Left ventricle myocardium inferior (tissue), 1 donor: ENCODE measurements at regions of chr6 and their contacts with region 1.

Region 1: DNA sequence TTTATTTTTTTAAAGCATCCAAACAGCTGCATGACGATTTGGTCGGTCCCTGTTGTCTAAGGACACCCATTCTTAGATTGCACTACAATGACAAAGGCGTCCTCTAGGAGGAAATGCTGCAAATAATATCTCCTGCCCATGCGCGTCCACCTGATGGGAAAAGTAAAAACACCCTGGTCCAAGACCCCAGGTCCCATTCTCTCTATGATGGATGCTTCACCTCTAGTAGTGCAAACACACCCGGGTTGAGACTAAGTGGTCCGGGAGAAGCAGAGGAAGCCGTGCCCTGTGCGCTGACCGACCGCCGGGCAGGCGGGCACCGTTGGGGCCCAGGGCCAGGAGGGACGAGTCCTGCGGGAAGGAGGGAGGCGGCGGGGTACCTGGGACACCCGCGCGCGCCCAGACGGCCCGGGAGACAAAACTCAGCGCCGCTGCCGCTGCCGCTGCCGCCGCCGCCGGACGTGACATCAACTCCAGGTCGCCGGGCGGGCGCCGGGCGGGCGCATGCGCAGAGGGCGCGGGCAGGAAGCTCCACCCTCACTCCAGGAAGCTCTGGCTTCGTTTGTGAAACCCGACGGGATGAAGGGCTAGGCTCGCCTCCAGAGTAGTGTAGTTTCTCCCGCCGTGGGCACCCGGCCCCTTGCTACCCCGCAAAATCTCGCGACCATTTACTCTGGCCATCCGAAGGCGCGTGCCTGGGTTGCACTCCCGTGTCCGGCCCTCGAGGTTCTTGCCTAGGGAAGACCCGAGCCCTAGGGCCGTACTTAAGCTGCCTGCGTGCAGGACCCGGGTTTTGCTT is at the start of gene TBC1D7:
- DNase-seq: peak; percentile 93
- H3K4me3 ChIP-seq: peak within 1 kb of the TSS; percentile 87
- H3K27ac ChIP-seq: peak within 1 kb of the TSS; percentile 95
- H3K4me1 ChIP-seq: peaks cover 61% of the 10 kb centered on the region
- H3K27me3 ChIP-seq: no peaks in the 10 kb centered on the region
- CTCF ChIP-seq: peak; percentile 34
- total RNA-seq, gene TBC1D7: 40.2 TPM

Region 2: DNA sequence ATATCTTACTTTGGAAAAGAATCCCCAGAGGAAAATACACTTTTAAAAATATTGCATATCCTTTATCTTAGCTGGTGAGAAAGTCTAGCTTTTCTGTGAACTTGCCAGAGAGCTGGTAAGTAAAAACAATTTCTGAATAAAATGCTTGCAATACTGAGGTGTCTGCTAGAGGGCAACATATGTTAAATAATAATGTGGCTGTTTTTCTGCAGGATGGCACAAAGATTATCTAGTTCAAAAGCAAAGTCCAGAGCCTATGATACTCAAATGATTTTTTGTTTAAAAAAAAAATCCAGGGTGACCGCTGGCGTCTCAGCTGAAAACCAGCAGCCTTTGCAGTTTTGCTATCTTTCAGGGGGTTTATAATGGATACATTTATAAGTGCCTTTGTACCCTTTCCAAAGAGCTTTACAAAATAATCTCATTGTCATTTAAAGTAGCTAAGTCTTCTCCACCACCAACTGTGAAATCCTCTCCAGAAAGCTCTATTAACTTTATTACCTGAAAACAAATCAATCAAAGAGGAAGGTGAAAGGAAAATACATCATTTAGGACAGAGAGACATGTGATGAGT is 416.8 kb before region 1 on chr6:
- intact Hi-C with region 1: loop called (anchors 10 kb)
- DNase-seq: no peak
- H3K4me3 ChIP-seq: no peak overlapping the region
- H3K27ac ChIP-seq: no peak overlapping the region
- H3K4me1 ChIP-seq: peaks cover 20% of the 10 kb centered on the region
- H3K27me3 ChIP-seq: no peaks in the 10 kb centered on the region
- CTCF ChIP-seq: peak; percentile 68

Region 3: DNA sequence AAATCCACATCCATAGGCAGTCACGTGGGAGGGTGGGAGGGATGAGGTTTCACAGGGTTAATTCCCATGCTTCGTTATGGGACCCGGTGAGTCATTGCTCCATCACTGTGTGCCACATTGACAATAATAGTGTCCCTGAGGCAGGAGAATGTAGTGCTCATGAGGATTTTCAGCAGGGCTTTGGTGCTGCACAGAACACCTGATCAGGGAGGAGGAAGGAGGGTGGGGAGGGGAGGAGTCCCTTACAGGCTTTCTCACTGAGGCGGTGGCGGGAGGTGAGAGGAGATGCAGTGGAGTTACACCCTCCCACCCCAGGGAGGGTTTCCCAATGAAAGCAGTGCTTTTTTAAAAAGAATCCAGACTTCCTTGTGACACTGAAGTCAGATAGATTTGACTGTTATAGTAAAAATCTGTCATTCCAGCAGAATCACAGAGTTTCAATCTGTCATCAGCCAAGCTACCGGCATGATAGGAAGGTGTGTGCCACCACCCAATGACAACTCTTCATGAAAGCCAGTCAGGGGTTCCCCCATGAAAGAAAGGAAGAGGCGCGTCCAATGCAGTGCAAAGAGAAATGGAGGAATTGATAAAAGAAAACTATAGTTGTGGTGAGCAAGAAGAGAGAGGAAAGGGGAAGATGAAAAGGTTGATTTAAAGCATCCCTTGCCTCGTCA is 144.7 kb before region 1 on chr6:
- intact Hi-C with region 1: no loop called
- DNase-seq: no peak
- H3K4me3 ChIP-seq: no peak overlapping the region
- H3K27ac ChIP-seq: no peak overlapping the region
- H3K4me1 ChIP-seq: no peaks in the 10 kb centered on the region
- H3K27me3 ChIP-seq: no peaks in the 10 kb centered on the region
- CTCF ChIP-seq: no peak